ENCODE measurements at regions of chrX and their contacts with region 1.

Region 1: DNA sequence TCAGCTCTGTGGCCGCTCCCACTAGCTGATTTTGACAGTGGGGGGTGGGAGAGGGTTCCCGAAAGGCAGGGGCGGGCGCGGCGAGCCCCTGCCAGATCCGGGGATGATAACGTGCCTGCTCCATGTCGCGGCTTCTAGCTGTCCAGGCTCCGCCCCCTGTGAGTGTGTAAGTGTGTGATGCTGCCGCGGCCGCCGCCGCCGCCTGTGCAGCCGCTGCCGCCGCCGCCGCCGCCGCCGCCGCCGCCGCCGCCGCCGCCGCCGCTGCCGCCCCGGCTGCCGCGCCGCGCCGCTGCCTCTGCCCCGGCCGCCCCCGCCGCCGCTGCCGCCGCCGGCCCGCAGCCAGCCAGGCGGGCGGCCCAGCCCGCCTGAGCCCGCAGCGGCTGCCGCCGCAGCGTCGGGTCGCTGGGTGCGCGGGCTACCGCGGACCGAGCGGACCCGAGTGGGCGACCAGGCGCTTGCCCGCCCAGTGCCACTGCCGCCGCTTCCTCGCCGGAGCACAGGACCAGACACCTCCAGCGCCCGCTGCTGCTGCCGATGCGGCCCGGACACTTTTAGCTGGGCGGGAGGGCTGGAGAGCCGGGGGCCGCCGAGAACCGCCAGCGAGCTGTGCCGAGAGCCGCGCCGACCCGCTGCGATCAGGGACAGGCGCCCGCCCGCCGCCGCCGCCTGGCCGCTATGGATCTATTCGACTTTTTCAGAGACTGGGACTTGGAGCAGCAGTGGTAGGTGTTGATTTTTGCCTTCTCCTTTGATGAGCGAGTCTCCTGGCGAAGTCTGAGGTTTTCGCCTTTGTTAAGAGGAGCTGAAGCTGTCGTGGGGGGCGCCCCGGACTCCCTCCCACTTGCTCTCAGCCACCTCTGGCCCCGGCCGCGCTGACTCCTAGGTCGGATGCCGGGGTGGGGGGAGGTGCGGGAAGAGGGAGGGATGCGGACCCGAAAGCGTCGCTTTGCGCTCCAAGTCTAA is at the start of gene AFF2:
- DNase-seq: peak; percentile 86
- H3K4me3 ChIP-seq: peak within 1 kb of the TSS; percentile 89
- H3K27ac ChIP-seq: peak within 1 kb of the TSS; percentile 91
- H3K4me1 ChIP-seq: peaks cover 57% of the 10 kb centered on the region
- CTCF ChIP-seq: no peak
- total RNA-seq, gene AFF2: 74.1 and 102 TPM in 2 replicates

Region 2: GRCh38 chrX:148133105-148133725 is 367.5 kb before region 1 on chrX:
- CTCF ChIA-PET with region 1: no interaction called
- POLR2A ChIA-PET with region 1: no interaction called
- intact Hi-C with region 1: loop called (anchors 5 kb)
- DNase-seq: peak; percentile 64
- H3K4me3 ChIP-seq: no peak overlapping the region
- H3K27ac ChIP-seq: no peak overlapping the region
- H3K4me1 ChIP-seq: peaks cover 14% of the 10 kb centered on the region
- CTCF ChIP-seq: peak; percentile 72

Region 3: GRCh38 chrX:148459343-148459742 is 41.4 kb before region 1 on chrX:
- CTCF ChIA-PET with region 1: no interaction called
- POLR2A ChIA-PET with region 1: interaction called, 3 read pairs
- intact Hi-C with region 1: loop called (anchors 1 kb)
- DNase-seq: peak; percentile 90
- H3K4me3 ChIP-seq: peak overlapping the region; percentile 50
- H3K27ac ChIP-seq: peak overlapping the region; percentile 100
- H3K4me1 ChIP-seq: peaks cover 78% of the 10 kb centered on the region
- CTCF ChIP-seq: no peak

Region 4: GRCh38 chrX:148523303-148524080 is 22.8 kb after region 1 on chrX:
- CTCF ChIA-PET with region 1: no interaction called
- POLR2A ChIA-PET with region 1: interaction called, 27 read pairs
- intact Hi-C with region 1: loop called (anchors 2 kb)
- DNase-seq: no peak
- H3K4me3 ChIP-seq: peak overlapping the region; percentile 59
- H3K27ac ChIP-seq: peak overlapping the region; percentile 100
- H3K4me1 ChIP-seq: peaks cover 96% of the 10 kb centered on the region
- CTCF ChIP-seq: no peak

Region 5: DNA sequence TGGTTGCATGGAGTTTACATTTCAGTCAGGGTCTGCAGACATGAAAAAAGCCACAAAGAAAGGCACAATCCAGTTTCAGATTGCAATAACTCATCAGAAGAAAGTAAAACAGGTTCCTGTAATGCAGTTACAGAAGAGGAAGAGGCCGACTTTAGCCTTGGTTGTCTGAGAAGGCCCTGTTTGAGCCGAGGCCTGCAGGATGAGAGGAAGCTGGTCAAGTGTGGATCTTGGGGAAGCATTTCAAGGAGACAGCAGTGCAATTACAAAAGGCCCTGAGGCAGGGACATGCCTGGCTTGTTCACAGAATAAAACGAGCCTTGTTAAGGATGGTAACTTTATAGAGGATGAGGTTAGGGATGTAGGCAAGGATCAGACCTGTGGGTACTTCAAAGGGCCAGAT is 62.1 kb after region 1 on chrX:
- CTCF ChIA-PET with region 1: no interaction called
- POLR2A ChIA-PET with region 1: no interaction called
- intact Hi-C with region 1: no loop called
- DNase-seq: peak; percentile 60
- H3K4me3 ChIP-seq: no peak overlapping the region
- H3K27ac ChIP-seq: peak overlapping the region; percentile 68
- H3K4me1 ChIP-seq: peaks cover 49% of the 10 kb centered on the region
- CTCF ChIP-seq: no peak

Region 6: GRCh38 chrX:148574237-148574973 is 73.7 kb after region 1 on chrX:
- CTCF ChIA-PET with region 1: no interaction called
- POLR2A ChIA-PET with region 1: interaction called, 3 read pairs
- intact Hi-C with region 1: loop called (anchors 2 kb)
- DNase-seq: peak; percentile 69
- H3K4me3 ChIP-seq: peak overlapping the region; percentile 47
- H3K27ac ChIP-seq: peak overlapping the region; percentile 95
- H3K4me1 ChIP-seq: peaks cover 84% of the 10 kb centered on the region
- CTCF ChIP-seq: no peak

Region 7: DNA sequence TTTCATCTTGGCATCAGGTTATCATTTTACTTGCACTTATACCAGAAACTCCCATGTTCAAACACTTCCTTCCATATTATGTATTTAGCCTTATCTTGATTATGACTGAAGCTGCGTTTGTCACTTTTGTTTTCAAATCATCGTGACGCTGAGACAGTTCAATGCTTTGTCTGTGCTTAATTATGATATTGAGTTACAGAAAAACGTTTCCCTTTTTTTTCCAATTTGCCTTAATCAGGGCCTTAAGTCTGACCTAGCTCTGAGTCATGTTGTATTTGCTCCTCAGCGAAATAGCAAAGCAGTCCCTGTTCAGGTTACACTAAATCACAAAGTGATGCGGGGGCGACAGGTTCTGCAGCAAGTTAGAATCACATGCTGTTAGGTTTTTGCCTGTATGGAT is 254.4 kb after region 1 on chrX:
- CTCF ChIA-PET with region 1: no interaction called
- POLR2A ChIA-PET with region 1: no interaction called
- intact Hi-C with region 1: no loop called
- DNase-seq: no peak
- H3K4me3 ChIP-seq: no peak overlapping the region
- H3K27ac ChIP-seq: no peak overlapping the region
- H3K4me1 ChIP-seq: no peaks in the 10 kb centered on the region
- CTCF ChIP-seq: no peak

Measured in OCI-LY7 (cell line).